GM12878 (cell line): ENCODE measurements at regions of chr15 and their contacts with region 1.

Region 1: DNA sequence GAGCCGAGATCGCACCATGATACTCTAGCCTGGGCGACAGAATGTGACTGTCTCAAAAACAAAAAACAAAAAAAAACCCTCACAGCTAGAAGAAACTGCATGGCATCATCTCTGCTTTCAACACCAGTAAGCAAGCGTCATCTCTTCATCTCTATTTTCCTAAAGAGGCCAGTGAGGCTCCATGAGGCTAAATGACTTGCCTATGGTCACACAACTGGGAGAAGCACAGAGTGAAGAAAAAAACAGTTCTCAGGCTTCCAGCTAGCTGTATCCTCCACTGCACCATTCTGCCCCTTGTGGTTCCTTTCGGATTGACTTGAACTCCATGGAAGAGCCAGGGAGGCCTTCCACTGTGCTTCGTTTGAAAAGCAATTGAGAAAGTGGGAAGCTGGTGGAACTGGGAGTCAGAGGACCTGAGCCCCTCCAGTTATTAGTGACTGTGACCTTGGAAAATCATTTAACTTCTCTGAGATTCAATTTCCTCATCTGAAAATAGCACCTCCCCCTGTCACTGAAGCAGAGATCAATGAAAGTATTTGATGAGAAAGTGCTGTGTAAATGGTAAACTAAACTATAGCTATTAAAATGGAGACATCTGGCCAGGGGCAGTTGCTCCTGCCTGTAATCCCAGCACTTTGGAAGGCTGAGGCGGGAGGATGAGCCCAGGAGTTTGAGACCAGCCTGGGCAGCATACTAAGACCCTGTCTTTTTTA is 32.1 kb upstream of the DENND4A start:
- DNase-seq: no peak
- ATAC-seq: peak; percentile 75
- H3K4me3 ChIP-seq: no peak overlapping the region
- H3K27ac ChIP-seq: peak overlapping the region; percentile 1; the same call in 1 of the 2 replicates
- H3K4me1 ChIP-seq: peaks cover 50% of the 10 kb centered on the region
- H3K27me3 ChIP-seq: no peaks in the 10 kb centered on the region
- CTCF ChIP-seq: peak; percentile 63 to 74 (median 73)
- EP300 ChIP-seq: no peak
- POLR2A ChIP-seq: no peak
- RAD21 ChIP-seq: peak; percentile 68

Region 2: GRCh38 chr15:65156692-65157091 is 667.5 kb before region 1 on chr15:
- CTCF ChIA-PET with region 1: no interaction called
- POLR2A ChIA-PET with region 1: no interaction called
- RAD21 ChIA-PET with region 1: no interaction called
- SMC1A ChIA-PET with region 1: no interaction called
- in situ Hi-C with region 1: no loop called
- intact Hi-C with region 1: no loop called
- DNase-seq: no peak
- ATAC-seq: no peak
- H3K4me3 ChIP-seq: no peak overlapping the region
- H3K27ac ChIP-seq: no peak overlapping the region
- H3K4me1 ChIP-seq: no peaks in the 10 kb centered on the region
- H3K27me3 ChIP-seq: no peaks in the 10 kb centered on the region
- CTCF ChIP-seq: no peak
- EP300 ChIP-seq: no peak
- POLR2A ChIP-seq: no peak
- RAD21 ChIP-seq: no peak

Region 3: DNA sequence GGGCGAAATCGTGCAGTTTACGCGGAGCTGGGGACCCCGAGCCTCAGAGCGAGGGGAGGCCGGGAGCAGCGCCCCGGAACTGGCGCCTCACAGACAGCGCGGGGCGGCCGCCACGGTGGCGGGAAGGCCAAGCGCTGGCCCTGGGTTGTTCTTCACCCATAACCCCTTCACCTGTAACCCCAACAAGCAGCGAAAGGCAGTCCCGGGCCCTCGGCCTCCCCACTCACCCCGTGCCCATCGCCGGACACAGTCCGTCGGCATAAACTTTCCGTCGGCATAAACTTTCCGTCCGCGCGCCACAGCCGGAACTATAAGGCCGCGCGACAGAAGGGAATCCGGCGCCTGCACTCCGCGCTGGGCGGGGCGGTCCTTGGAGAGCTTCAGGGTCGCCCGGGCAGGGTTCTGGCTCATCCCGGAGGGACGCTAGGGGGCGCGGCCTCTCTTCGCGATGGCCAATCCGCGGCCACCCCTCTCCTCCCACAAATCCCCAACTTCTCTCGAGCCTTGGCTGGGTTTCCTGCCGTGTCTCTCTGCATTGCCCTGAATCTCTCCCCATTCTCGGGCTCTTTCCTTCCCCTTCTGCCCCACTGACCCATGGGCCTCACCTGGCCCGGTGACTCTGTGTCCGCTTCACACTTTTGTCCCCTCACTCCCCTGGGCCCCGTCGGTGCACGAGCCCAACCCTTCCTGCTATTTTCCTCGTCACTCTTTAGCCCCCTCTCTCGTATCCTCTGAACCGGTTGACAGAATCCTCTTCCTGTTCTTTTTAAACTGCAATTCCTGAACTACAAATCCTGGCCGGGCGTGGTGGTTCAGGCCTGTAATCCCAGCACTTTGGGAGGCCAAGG is 213.1 kb before region 1 on chr15 and contains the start of gene INTS14:
- CTCF ChIA-PET with region 1: interaction called, 10 read pairs
- POLR2A ChIA-PET with region 1: no interaction called
- RAD21 ChIA-PET with region 1: interaction called, 3 read pairs
- SMC1A ChIA-PET with region 1: no interaction called
- in situ Hi-C with region 1: no loop called
- intact Hi-C with region 1: no loop called
- DNase-seq: peak; percentile 67
- ATAC-seq: peak; percentile 99
- H3K4me3 ChIP-seq: peak within 1 kb of the TSS; percentile 88
- H3K27ac ChIP-seq: peak within 1 kb of the TSS; percentile 76
- H3K4me1 ChIP-seq: peaks cover 7% of the 10 kb centered on the region
- H3K27me3 ChIP-seq: no peaks in the 10 kb centered on the region
- CTCF ChIP-seq: peak; percentile 63 to 92 (median 67)
- EP300 ChIP-seq: peak in 1 of 2 experiments; percentile 27; a peak in 1 of 4 replicates
- POLR2A ChIP-seq: peak; percentile 88
- RAD21 ChIP-seq: peak; percentile 41; the same call in 1 of the 2 replicates
- polyA plus RNA-seq, gene INTS14: 39.4 to 41.9 TPM

Region 4: GRCh38 chr15:65752151-65752700 is 72.0 kb before region 1 on chr15:
- CTCF ChIA-PET with region 1: interaction called, 5 read pairs
- POLR2A ChIA-PET with region 1: no interaction called
- RAD21 ChIA-PET with region 1: no interaction called
- SMC1A ChIA-PET with region 1: interaction called, 11 read pairs
- in situ Hi-C with region 1: no loop called
- intact Hi-C with region 1: no loop called
- DNase-seq: no peak
- ATAC-seq: no peak
- H3K4me3 ChIP-seq: no peak overlapping the region
- H3K27ac ChIP-seq: no peak overlapping the region
- H3K4me1 ChIP-seq: peaks cover 6% of the 10 kb centered on the region; the same call in 1 of the 2 replicates
- H3K27me3 ChIP-seq: no peaks in the 10 kb centered on the region
- CTCF ChIP-seq: no peak
- EP300 ChIP-seq: no peak
- POLR2A ChIP-seq: no peak
- RAD21 ChIP-seq: no peak

Region 5: GRCh38 chr15:65767895-65768294 is 56.3 kb before region 1 on chr15:
- CTCF ChIA-PET with region 1: interaction called, 11 read pairs
- POLR2A ChIA-PET with region 1: interaction called, 4 read pairs
- RAD21 ChIA-PET with region 1: interaction called, 6 read pairs
- SMC1A ChIA-PET with region 1: interaction called, 11 read pairs
- in situ Hi-C with region 1: no loop called
- intact Hi-C with region 1: loop called (anchors 5 kb)
- DNase-seq: no peak
- ATAC-seq: peak; percentile 27
- H3K4me3 ChIP-seq: no peak overlapping the region
- H3K27ac ChIP-seq: no peak overlapping the region
- H3K4me1 ChIP-seq: peaks cover 6% of the 10 kb centered on the region
- H3K27me3 ChIP-seq: no peaks in the 10 kb centered on the region
- CTCF ChIP-seq: no peak
- EP300 ChIP-seq: no peak
- POLR2A ChIP-seq: no peak
- RAD21 ChIP-seq: no peak

Region 6: DNA sequence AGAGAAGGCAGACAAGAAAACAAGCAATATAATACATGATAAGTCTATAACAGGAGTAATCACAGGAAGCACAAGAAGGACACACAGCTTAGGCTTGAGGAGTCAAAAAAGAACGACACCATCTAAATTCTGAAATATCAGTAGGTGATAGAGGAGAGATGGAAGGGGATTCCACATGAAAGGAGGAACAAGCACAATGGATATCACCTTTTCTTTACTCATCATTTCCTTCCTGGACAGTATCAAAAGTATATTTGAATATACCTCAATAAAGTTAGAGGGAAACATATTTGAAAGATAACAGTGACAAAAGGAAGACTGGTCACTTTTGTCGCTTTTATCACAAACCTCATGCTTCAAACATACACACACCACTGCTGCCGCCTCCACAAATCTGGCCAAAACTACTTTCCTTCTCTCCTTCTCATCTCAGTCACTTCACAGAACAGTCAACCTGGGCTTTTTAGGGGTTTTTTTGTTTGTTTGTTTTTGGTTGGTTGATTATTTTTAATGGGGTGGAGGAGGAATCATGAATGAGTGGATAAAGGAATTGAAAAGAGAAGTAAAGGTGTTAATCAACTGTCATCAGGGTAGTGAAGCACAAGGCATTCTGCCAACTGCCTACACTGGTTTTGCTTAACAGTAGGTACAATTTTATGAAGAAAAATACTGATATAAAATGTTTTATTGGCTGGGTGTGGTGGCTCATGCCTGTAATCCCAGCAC is 50.6 kb before region 1 on chr15:
- CTCF ChIA-PET with region 1: interaction called, 11 read pairs
- POLR2A ChIA-PET with region 1: interaction called, 10 read pairs
- RAD21 ChIA-PET with region 1: interaction called, 9 read pairs
- SMC1A ChIA-PET with region 1: interaction called, 30 read pairs
- in situ Hi-C with region 1: no loop called
- intact Hi-C with region 1: loop called (anchors 5 kb)
- DNase-seq: peak; percentile 88
- ATAC-seq: peak; percentile 78
- H3K4me3 ChIP-seq: no peak overlapping the region; the same call in 1 of the 2 replicates
- H3K27ac ChIP-seq: peak overlapping the region; percentile 84
- H3K4me1 ChIP-seq: peaks cover 21% of the 10 kb centered on the region
- H3K27me3 ChIP-seq: no peaks in the 10 kb centered on the region
- CTCF ChIP-seq: no peak
- EP300 ChIP-seq: peak; percentile 45 to 63; a peak in 3 of 4 replicates
- POLR2A ChIP-seq: no peak
- RAD21 ChIP-seq: peak; percentile 25; the same call in 1 of the 2 replicates

Region 7: GRCh38 chr15:65812916-65813315 is 11.3 kb before region 1 on chr15:
- CTCF ChIA-PET with region 1: interaction called, 7 read pairs
- POLR2A ChIA-PET with region 1: interaction called, 11 read pairs
- RAD21 ChIA-PET with region 1: interaction called, 3 read pairs
- SMC1A ChIA-PET with region 1: interaction called, 488 read pairs
- in situ Hi-C with region 1: no loop called
- intact Hi-C with region 1: no loop called
- DNase-seq: no peak
- ATAC-seq: no peak
- H3K4me3 ChIP-seq: no peak overlapping the region
- H3K27ac ChIP-seq: no peak overlapping the region
- H3K4me1 ChIP-seq: peaks cover 28% of the 10 kb centered on the region
- H3K27me3 ChIP-seq: no peaks in the 10 kb centered on the region
- CTCF ChIP-seq: no peak
- EP300 ChIP-seq: no peak
- POLR2A ChIP-seq: no peak
- RAD21 ChIP-seq: no peak

Region 8: DNA sequence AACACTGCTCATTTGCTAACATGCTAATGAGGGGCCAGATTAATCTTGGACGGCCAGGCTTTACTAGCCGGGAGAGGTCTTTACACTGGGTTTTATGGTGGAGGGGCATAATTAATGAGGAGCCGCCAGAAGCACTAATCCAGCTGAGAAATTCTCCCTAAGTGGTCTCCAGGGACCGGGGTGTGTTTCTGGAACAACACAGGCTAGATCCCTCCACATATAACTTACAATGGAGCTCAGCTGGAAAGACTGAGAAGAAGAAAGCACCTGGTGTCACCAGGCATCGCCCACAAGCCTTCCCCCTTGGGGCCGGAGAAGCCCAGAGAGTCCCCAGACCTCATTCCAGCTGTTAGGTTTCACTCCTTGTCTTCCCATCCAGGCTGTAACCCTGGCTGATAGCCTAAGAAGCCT is 301.8 kb after region 1 on chr15:
- CTCF ChIA-PET with region 1: no interaction called
- POLR2A ChIA-PET with region 1: no interaction called
- RAD21 ChIA-PET with region 1: no interaction called
- SMC1A ChIA-PET with region 1: no interaction called
- in situ Hi-C with region 1: no loop called
- intact Hi-C with region 1: no loop called
- DNase-seq: no peak
- ATAC-seq: no peak
- H3K4me3 ChIP-seq: no peak overlapping the region
- H3K27ac ChIP-seq: no peak overlapping the region
- H3K4me1 ChIP-seq: no peaks in the 10 kb centered on the region
- H3K27me3 ChIP-seq: peaks cover 4 to 5% of the 10 kb centered on the region in 2 experiments
- CTCF ChIP-seq: no peak
- EP300 ChIP-seq: no peak
- POLR2A ChIP-seq: no peak
- RAD21 ChIP-seq: no peak